ENCODE measurements at regions of chr17 and their contacts with region 1.

Region 1: GRCh38 chr17:38824899-38825761 is at the start of gene CWC25:
- DNase-seq: peak; percentile 97 to 98
- H3K4me3 ChIP-seq: peak within 1 kb of the TSS; percentile 65 to 86
- H3K27ac ChIP-seq: peak within 1 kb of the TSS; percentile 92
- H3K4me1 ChIP-seq: peaks cover 35% of the 10 kb centered on the region
- H3K27me3 ChIP-seq: no peaks in the 10 kb centered on the region
- CTCF ChIP-seq: peak in 1 of 3 experiments; percentile 25
- POLR2A ChIP-seq: peak in 1 of 2 donors; percentile 77
- total RNA-seq, gene CWC25: 25.5 TPM

Region 2: DNA sequence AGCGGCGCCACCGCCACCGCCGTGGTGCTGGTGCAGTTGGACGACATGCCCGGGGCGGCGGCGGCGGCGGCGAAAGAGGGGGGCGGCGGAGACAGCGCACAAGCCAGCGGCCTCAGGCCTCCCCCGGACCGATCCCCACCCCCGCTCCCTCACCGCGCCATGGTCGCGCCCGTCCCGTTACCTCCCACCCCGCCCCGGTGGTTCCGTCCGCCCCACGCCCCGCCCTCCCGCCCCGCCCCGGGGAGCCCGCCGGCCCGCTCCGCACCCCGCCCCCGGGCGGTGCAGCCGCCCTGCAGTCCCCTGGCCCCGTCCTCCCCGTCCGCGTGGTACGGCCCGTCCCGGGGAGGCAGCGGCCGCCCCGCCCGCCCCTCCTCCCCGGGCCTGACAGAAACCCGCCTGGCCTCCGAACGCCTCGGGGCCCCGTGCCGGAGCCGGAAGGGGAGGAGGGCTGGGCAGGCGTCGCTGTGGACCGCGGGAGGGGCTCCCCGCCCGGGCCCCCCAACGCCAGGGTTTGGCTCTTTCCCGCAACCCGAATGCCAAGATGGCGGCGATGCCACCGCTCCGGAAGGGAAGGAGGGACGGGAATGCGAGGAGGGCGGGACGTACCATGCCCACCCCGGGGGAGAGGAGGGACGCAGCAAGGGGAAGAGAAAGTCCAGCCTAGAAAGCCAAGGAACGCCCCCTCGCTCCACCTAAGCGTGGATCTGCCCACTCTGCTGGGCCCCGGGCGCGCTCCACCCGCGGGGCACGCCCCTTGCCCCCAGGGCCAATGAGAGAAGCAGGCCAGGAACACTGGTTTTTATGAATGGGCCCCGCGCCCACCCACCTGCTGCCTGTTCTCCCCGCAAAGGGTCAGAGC is 25.5 kb before region 1 on chr17 and contains the start of gene PIP4K2B:
- intact Hi-C with region 1: loop called (anchors 1 kb)
- DNase-seq: peak in 1 of 2 donors; percentile 93
- H3K4me3 ChIP-seq: peak within 1 kb of the TSS; percentile 78 to 98
- H3K27ac ChIP-seq: peak within 1 kb of the TSS; percentile 97
- H3K4me1 ChIP-seq: peaks cover 29% of the 10 kb centered on the region
- H3K27me3 ChIP-seq: no peaks in the 10 kb centered on the region
- CTCF ChIP-seq: no peak
- POLR2A ChIP-seq: no peak
- total RNA-seq, gene PIP4K2B: 68.5 TPM

Region 3: GRCh38 chr17:39069114-39069756 is 244.1 kb after region 1 on chr17:
- intact Hi-C with region 1: no loop called
- DNase-seq: no peak
- H3K4me3 ChIP-seq: no peak overlapping the region
- H3K27ac ChIP-seq: no peak overlapping the region
- H3K4me1 ChIP-seq: peaks cover 20% of the 10 kb centered on the region
- H3K27me3 ChIP-seq: no peaks in the 10 kb centered on the region
- CTCF ChIP-seq: peak in 1 of 3 experiments; percentile 48
- POLR2A ChIP-seq: no peak

Measured in vagina (tissue), 2 donors.